Posterior vena cava (tissue), 2 donors: ENCODE measurements at regions of chr12 and their contacts with region 1.

Region 1: GRCh38 chr12:14435627-14436026 is 70.1 kb downstream of the ATF7IP start:
- DNase-seq: no peak

Region 2: DNA sequence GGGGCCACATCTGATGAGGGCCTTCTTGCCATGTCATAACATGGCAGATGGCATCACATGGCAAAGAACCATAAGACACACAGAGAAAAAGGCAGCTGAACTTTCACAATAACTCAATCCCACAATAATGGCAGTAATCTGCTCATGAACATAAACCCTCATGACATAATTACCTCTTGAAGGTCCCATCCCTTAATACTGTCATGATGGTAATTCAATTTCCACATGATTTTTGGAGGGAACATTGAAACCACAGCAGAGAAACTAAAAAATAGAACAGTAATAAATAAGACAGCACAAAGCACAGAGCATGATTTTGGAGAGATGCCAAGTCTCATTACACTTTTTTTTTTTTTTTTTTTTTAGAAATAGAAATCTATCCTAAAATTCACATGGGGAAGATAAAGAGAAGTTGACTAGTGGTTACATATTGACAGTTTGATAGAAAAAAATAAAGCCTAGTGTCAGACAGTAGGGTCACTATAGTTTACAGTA is 131.9 kb before region 1 on chr12:
- intact Hi-C with region 1: loop called in 1 of 2 experiments (anchors 5 kb)
- DNase-seq: no peak

Region 3: DNA sequence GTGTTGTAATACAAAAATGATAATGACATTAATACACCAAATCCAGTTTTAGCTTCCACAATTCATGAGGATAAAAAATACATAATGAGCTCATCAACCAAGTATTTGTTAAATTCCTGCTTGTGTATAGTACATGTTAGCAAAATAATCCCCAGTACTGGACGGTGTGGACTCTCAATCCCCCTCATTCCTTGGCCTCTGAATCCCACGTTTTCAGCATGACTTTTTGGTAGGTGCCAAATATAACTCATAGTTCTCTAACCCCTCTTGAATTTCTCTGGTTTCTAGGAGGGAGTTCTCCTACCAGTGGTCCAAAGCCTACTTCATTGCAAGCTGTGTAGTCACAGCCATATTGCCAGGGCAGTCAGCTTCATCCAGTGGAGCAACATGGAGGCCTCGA is 1394.9 kb after region 1 on chr12:
- intact Hi-C with region 1: no loop called
- DNase-seq: no peak